ENCODE measurements at regions of chr1 and their contacts with region 1.

Region 1: DNA sequence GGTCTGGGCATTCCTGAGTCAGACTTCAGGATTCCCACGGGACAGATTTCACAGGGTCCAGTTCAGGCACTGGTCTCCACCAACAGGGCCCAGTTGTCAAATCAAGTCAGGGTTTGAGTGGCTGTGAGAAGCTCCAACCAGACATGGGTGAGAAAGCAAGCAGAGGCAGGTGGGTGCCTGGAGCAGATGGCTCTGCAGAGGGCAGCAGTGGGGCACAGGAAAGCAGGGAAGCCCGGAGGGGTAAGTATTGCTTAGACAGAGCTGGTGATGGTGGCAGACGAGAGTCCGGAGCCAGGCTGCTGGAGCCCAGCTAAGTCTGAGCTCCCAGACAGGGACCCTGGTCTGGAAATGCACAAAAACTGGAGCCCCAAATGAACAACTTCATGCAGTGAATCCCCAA is 40.4 kb downstream of the RIMS3 start:
- DNase-seq: peak; percentile 18
- ATAC-seq: peak; percentile 88
- H3K4me3 ChIP-seq: no peak overlapping the region
- H3K27ac ChIP-seq: no peak overlapping the region
- H3K4me1 ChIP-seq: no peaks in the 10 kb centered on the region
- H3K27me3 ChIP-seq: no peaks in the 10 kb centered on the region
- CTCF ChIP-seq: peak; percentile 65
- EP300 ChIP-seq: no peak
- POLR2A ChIP-seq: no peak
- RAD21 ChIP-seq: peak; percentile 65

Region 2: DNA sequence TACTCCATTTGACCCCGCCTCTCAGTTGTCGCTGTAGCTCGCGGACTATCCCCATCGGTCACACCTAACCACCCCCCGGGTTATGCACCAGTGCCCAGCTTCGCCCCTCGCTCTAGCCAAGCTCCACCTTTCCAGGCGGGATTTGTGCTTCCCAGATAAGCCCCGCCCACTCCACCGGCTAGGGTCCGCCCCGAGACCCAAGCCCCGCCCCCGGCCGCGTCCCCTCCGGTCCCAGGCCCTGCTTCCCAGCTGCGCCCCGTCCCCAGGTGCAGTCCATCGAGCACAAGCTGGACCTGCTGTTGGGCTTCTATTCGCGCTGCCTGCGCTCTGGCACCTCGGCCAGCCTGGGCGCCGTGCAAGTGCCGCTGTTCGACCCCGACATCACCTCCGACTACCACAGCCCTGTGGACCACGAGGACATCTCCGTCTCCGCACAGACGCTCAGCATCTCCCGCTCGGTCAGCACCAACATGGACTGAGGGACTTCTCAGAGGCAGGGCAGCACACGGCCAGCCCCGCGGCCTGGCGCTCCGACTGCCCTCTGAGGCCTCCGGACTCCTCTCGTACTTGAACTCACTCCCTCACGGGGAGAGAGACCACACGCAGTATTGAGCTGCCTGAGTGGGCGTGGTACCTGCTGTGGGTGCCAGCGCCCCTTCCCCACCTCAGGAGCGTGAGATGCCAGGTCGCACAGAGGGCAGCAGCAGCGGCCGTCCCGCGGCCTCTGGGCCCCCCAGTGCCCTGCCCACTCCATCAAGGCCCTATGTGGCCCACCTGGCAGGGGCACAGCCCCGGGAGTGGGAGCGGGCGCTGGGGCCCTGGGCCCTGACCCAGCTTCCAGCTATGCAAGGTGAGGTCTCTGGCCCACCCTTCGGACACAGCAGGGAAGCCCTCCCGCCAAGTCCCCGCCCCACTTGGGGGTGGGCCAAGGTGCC is 213.2 kb after region 1 on chr1:
- CTCF ChIA-PET with region 1: no interaction called
- POLR2A ChIA-PET with region 1: no interaction called
- in situ Hi-C with region 1: loop called (anchors 10 kb)
- intact Hi-C with region 1: no loop called
- DNase-seq: no peak
- ATAC-seq: no peak
- H3K4me3 ChIP-seq: no peak overlapping the region
- H3K27ac ChIP-seq: no peak overlapping the region
- H3K4me1 ChIP-seq: peaks cover 9% of the 10 kb centered on the region; the same call in 1 of the 2 replicates
- H3K27me3 ChIP-seq: peaks cover 0 to 6% of the 10 kb centered on the region in 2 experiments; a peak in 1 of 5 replicates
- CTCF ChIP-seq: no peak
- EP300 ChIP-seq: no peak
- POLR2A ChIP-seq: no peak
- RAD21 ChIP-seq: no peak